ENCODE measurements at regions of chr12 and their contacts with region 1.

Region 1: GRCh38 chr12:49130151-49131050 is 794 bp downstream of the TUBA1B start:
- DNase-seq: peak; percentile 87 to 95 (median 94)
- ATAC-seq: peak; percentile 77
- H3K4me3 ChIP-seq: peak overlapping the region; percentile 92
- H3K4me3 Mint-ChIP-seq: peak overlapping the region; percentile 95 to 99 (median 98)
- H3K27ac ChIP-seq: peak overlapping the region; percentile 95
- H3K27ac Mint-ChIP-seq: peak overlapping the region; percentile 97 to 99 (median 99)
- H3K4me1 ChIP-seq: peaks cover 24 to 27% of the 10 kb centered on the region in 2 donors
- H3K4me1 Mint-ChIP-seq: peaks cover 24 to 61% (median 55%) of the 10 kb centered on the region in 7 donors
- H3K27me3 ChIP-seq: no peaks in the 10 kb centered on the region
- H3K27me3 Mint-ChIP-seq: peaks cover 0 to 7% (median 0%) of the 10 kb centered on the region in 5 donors

Region 2: GRCh38 chr12:49018261-49019119 is 111.9 kb before region 1 on chr12 and contains the start of gene PRKAG1:
- CTCF ChIA-PET with region 1: no interaction called
- POLR2A ChIA-PET with region 1: no interaction called
- intact Hi-C with region 1: loop called (anchors 1 kb)
- DNase-seq: peak; percentile 93 to 98 (median 97)
- ATAC-seq: peak; percentile 94
- H3K4me3 ChIP-seq: peak within 1 kb of the TSS; percentile 78
- H3K4me3 Mint-ChIP-seq: peak within 1 kb of the TSS; percentile 79 to 98 (median 94)
- H3K27ac ChIP-seq: peak within 1 kb of the TSS; percentile 86
- H3K27ac Mint-ChIP-seq: peak within 1 kb of the TSS; percentile 96 to 100 (median 99)
- H3K4me1 ChIP-seq: peaks cover 16 to 19% of the 10 kb centered on the region in 2 donors
- H3K4me1 Mint-ChIP-seq: peaks cover 23 to 53% (median 45%) of the 10 kb centered on the region in 7 donors
- H3K27me3 ChIP-seq: no peaks in the 10 kb centered on the region
- H3K27me3 Mint-ChIP-seq: no peaks in the 10 kb centered on the region
- total RNA-seq, gene PRKAG1: 34.0 to 74.4 (median 50.6) TPM

Region 3: GRCh38 chr12:49088190-49088931 is 42.0 kb before region 1 on chr12:
- CTCF ChIA-PET with region 1: interaction called, 19 read pairs
- POLR2A ChIA-PET with region 1: interaction called, 26 read pairs
- intact Hi-C with region 1: loop called (anchors 1 kb)
- DNase-seq: peak; percentile 39 to 73 (median 70)
- ATAC-seq: peak; percentile 94
- H3K4me3 ChIP-seq: no peak overlapping the region
- H3K4me3 Mint-ChIP-seq: peak overlapping the region in 7 of 10 donors; percentile 11 to 59 (median 48)
- H3K27ac ChIP-seq: no peak overlapping the region
- H3K27ac Mint-ChIP-seq: peak overlapping the region in 2 of 9 donors; percentile 5 to 34
- H3K4me1 ChIP-seq: peaks cover 35 to 40% of the 10 kb centered on the region in 2 donors
- H3K4me1 Mint-ChIP-seq: peaks cover 22 to 53% (median 38%) of the 10 kb centered on the region in 7 donors
- H3K27me3 ChIP-seq: peaks cover 14 to 37% of the 10 kb centered on the region in 2 donors
- H3K27me3 Mint-ChIP-seq: peaks cover 32 to 58% (median 49%) of the 10 kb centered on the region in 5 donors

Region 4: DNA sequence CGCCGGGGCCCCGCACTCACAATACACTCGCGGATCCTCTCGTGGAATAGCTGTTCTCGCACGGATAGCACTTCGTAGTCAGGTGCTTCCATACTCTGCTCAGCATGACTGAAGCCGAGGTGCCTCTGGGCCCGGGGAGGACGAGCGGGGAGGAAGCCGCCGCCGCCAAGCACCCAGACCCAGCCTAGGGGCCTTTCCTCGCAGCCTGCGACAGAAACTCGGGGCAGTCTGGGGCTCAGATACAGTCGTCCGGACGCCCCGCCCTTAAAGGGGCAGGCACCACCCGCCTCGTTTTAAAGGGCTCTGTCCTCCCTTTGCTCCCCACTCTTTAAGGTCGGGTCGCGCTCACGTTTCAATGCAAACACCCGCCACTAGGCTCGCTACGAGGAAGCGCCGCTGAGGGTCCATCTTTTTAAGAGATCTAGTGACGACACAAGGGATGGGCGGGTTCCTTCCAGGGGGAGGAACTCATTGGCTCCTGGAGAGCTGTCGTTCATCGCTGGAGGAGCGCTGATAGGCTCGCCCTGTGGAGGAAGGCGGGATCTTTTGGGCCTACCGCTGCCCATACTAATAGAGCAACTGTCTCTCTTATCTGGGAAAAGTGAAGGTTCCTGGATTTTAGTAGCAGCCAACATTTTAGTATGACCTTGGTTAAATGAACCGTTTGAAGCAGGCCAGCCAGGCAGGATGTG is 19.8 kb before region 1 on chr12 and contains the start of gene LMBR1L:
- CTCF ChIA-PET with region 1: interaction called, 18 read pairs
- POLR2A ChIA-PET with region 1: interaction called, 150 read pairs
- intact Hi-C with region 1: loop called (anchors 1 kb)
- DNase-seq: peak; percentile 76 to 98 (median 96)
- ATAC-seq: peak; percentile 96
- H3K4me3 ChIP-seq: peak within 1 kb of the TSS; percentile 76
- H3K4me3 Mint-ChIP-seq: peak within 1 kb of the TSS; percentile 95 to 100 (median 98)
- H3K27ac ChIP-seq: peak within 1 kb of the TSS; percentile 95
- H3K27ac Mint-ChIP-seq: peak within 1 kb of the TSS; percentile 96 to 99 (median 99)
- H3K4me1 ChIP-seq: peaks cover 14 to 19% of the 10 kb centered on the region in 2 donors
- H3K4me1 Mint-ChIP-seq: peaks cover 14 to 48% (median 44%) of the 10 kb centered on the region in 7 donors
- H3K27me3 ChIP-seq: no peaks in the 10 kb centered on the region
- H3K27me3 Mint-ChIP-seq: no peaks in the 10 kb centered on the region
- total RNA-seq, gene LMBR1L: 67.4 to 328 (median 263) TPM

Region 5: DNA sequence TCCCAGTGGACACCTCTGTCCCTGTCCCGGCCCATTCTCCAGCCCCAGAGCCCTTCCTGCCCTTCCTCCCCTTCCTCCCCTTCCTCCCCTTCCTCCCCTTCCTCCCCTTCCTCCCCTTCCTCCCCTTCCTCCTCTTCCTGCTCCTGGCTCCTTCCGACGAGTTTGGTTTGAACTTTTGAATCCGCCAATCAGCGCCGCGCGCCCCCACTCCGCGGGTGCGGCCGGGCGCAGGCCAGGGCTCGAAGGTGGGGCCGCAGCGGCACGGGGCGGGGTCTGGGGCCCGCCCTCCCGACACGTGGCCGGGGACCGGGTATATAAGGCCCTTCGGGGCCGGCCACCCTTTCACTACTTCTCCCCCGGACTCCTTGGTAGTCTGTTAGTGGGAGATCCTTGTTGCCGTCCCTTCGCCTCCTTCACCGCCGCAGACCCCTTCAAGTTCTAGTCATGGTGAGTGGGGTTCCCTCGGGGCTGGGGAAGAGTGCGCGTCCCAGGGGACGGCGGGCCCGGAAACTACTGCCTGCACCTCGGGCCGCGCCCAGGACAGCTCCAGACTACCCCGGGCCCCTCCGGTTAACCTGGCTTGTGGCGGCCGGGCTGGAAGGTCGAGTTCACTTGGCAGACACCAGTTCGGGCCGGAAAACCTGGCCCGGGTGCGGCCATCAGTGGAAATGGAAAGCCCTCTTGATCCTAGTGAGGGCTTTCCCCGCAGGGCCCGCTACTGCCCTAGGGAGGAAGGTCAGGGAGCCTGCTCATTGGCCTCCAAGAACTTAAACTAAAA is 134.5 kb after region 1 on chr12 and contains the start of gene TUBA1C:
- CTCF ChIA-PET with region 1: interaction called, 3 read pairs
- POLR2A ChIA-PET with region 1: interaction called, 6 read pairs
- intact Hi-C with region 1: loop called (anchors 1 kb)
- DNase-seq: peak; percentile 67 to 98 (median 72)
- ATAC-seq: peak; percentile 93
- H3K4me3 ChIP-seq: peak within 1 kb of the TSS; percentile 91
- H3K4me3 Mint-ChIP-seq: peak within 1 kb of the TSS; percentile 88 to 99 (median 92)
- H3K27ac ChIP-seq: peak within 1 kb of the TSS; percentile 68
- H3K27ac Mint-ChIP-seq: peak within 1 kb of the TSS; percentile 65 to 99 (median 89)
- H3K4me1 ChIP-seq: peaks cover 16% of the 10 kb centered on the region in 2 donors
- H3K4me1 Mint-ChIP-seq: peaks cover 4 to 51% (median 11%) of the 10 kb centered on the region in 7 donors
- H3K27me3 ChIP-seq: no peaks in the 10 kb centered on the region
- H3K27me3 Mint-ChIP-seq: peaks cover 0 to 2% (median 0%) of the 10 kb centered on the region in 5 donors
- total RNA-seq, gene TUBA1C: 17.9 to 195 (median 24.1) TPM

Region 6: GRCh38 chr12:49567611-49568441 is 437.4 kb after region 1 on chr12 and contains the start of gene MCRS1:
- CTCF ChIA-PET with region 1: no interaction called
- POLR2A ChIA-PET with region 1: interaction called, 3 read pairs
- intact Hi-C with region 1: loop called in 1 of 2 experiments (anchors 5 kb)
- DNase-seq: peak; percentile 89 to 94 (median 91)
- ATAC-seq: peak; percentile 92
- H3K4me3 ChIP-seq: peak within 1 kb of the TSS; percentile 81
- H3K4me3 Mint-ChIP-seq: peak within 1 kb of the TSS; percentile 94 to 100 (median 99)
- H3K27ac ChIP-seq: peak within 1 kb of the TSS; percentile 91
- H3K27ac Mint-ChIP-seq: peak within 1 kb of the TSS; percentile 98 to 100 (median 99)
- H3K4me1 ChIP-seq: peaks cover 33 to 42% of the 10 kb centered on the region in 2 donors
- H3K4me1 Mint-ChIP-seq: peaks cover 45 to 76% (median 61%) of the 10 kb centered on the region in 7 donors
- H3K27me3 ChIP-seq: no peaks in the 10 kb centered on the region
- H3K27me3 Mint-ChIP-seq: peaks cover 0 to 3% (median 0%) of the 10 kb centered on the region in 5 donors
- total RNA-seq, gene MCRS1: 70.0 to 85.2 (median 71.4) TPM